MCF 10A (cell line): ENCODE measurements at regions of chr11 and their contacts with region 1.

Region 1: GRCh38 chr11:14336507-14337503 is 22.2 kb downstream of the RRAS2 start:
- DNase-seq: peak; percentile 97
- H3K4me3 Mint-ChIP-seq: peak overlapping the region; percentile 59
- H3K27ac Mint-ChIP-seq: peak overlapping the region; percentile 97
- H3K4me1 Mint-ChIP-seq: peaks cover 40% of the 10 kb centered on the region
- H3K27me3 Mint-ChIP-seq: no peaks in the 10 kb centered on the region
- CTCF ChIP-seq: no peak

Region 2: GRCh38 chr11:14029971-14030920 is 306.6 kb before region 1 on chr11:
- CTCF ChIA-PET with region 1: no interaction called
- POLR2A ChIA-PET with region 1: no interaction called
- intact Hi-C with region 1: no loop called
- DNase-seq: peak; percentile 88
- H3K4me3 Mint-ChIP-seq: no peak overlapping the region
- H3K27ac Mint-ChIP-seq: peak overlapping the region; percentile 2
- H3K4me1 Mint-ChIP-seq: peaks cover 18% of the 10 kb centered on the region
- H3K27me3 Mint-ChIP-seq: peaks cover 12% of the 10 kb centered on the region
- CTCF ChIP-seq: no peak

Region 3: GRCh38 chr11:14237444-14237961 is 99.3 kb before region 1 on chr11:
- CTCF ChIA-PET with region 1: no interaction called
- POLR2A ChIA-PET with region 1: no interaction called
- intact Hi-C with region 1: no loop called
- DNase-seq: no peak
- H3K4me3 Mint-ChIP-seq: no peak overlapping the region
- H3K27ac Mint-ChIP-seq: no peak overlapping the region
- H3K4me1 Mint-ChIP-seq: no peaks in the 10 kb centered on the region
- H3K27me3 Mint-ChIP-seq: peaks cover 71% of the 10 kb centered on the region
- CTCF ChIP-seq: no peak

Region 4: GRCh38 chr11:14308114-14308896 is 28.5 kb before region 1 on chr11:
- CTCF ChIA-PET with region 1: interaction called, 5 read pairs
- POLR2A ChIA-PET with region 1: interaction called, 21 read pairs
- intact Hi-C with region 1: no loop called
- DNase-seq: peak; percentile 65
- H3K4me3 Mint-ChIP-seq: no peak overlapping the region
- H3K27ac Mint-ChIP-seq: no peak overlapping the region
- H3K4me1 Mint-ChIP-seq: peaks cover 2% of the 10 kb centered on the region
- H3K27me3 Mint-ChIP-seq: no peaks in the 10 kb centered on the region
- CTCF ChIP-seq: peak; percentile 42

Region 5: GRCh38 chr11:14320020-14320419 is 16.8 kb before region 1 on chr11:
- CTCF ChIA-PET with region 1: interaction called, 3 read pairs
- POLR2A ChIA-PET with region 1: interaction called, 12 read pairs
- intact Hi-C with region 1: no loop called
- DNase-seq: no peak
- H3K4me3 Mint-ChIP-seq: no peak overlapping the region
- H3K27ac Mint-ChIP-seq: no peak overlapping the region
- H3K4me1 Mint-ChIP-seq: peaks cover 36% of the 10 kb centered on the region
- H3K27me3 Mint-ChIP-seq: no peaks in the 10 kb centered on the region
- CTCF ChIP-seq: no peak

Region 6: DNA sequence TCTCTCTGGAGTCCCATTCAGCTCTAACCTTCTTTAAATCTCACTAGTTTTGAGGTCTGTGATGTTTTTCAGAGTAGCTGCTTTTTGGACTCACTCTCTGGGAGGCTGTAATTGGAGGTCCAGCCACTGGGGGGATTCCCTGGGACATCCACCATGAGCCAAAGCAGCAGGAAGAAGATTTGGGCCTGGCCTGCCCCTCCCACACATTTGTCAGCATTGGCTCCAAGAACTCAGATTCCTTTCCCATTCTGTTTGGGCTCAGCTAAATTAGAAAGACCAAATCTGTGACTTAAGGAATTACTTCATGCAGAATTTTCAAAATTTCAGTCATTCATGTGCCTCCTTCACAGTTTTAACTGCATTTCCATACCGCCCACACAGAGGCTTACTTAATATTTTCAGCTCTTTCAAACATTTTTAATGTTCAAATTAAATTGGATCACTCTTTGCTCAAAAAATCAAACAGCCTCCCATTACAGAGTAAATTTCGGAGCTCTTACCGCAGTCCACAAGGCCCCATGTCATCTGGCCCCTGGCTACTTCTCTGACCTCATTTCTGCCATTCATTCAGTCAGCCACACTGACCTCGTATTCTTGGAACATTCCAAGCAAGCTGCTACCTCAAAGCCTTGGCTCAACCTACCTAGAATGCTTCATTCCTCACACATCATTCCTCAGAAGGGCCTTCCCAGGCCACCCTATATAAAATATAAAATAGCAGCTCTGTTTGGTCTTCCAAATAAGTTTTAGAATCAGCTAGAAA is 76.7 kb after region 1 on chr11:
- CTCF ChIA-PET with region 1: interaction called, 8 read pairs
- POLR2A ChIA-PET with region 1: interaction called, 16 read pairs
- intact Hi-C with region 1: no loop called
- DNase-seq: peak; percentile 47
- H3K4me3 Mint-ChIP-seq: no peak overlapping the region
- H3K27ac Mint-ChIP-seq: no peak overlapping the region
- H3K4me1 Mint-ChIP-seq: peaks cover 60% of the 10 kb centered on the region
- H3K27me3 Mint-ChIP-seq: no peaks in the 10 kb centered on the region
- CTCF ChIP-seq: no peak

Region 7: GRCh38 chr11:14506532-14506931 is 169.7 kb after region 1 on chr11:
- CTCF ChIA-PET with region 1: no interaction called
- POLR2A ChIA-PET with region 1: no interaction called
- intact Hi-C with region 1: no loop called
- DNase-seq: no peak
- H3K4me3 Mint-ChIP-seq: no peak overlapping the region
- H3K27ac Mint-ChIP-seq: no peak overlapping the region
- H3K4me1 Mint-ChIP-seq: peaks cover 8% of the 10 kb centered on the region
- H3K27me3 Mint-ChIP-seq: no peaks in the 10 kb centered on the region
- CTCF ChIP-seq: no peak